ENCODE measurements at regions of chr9 and their contacts with region 1.

Region 1: GRCh38 chr9:84139296-84140070 is 158.9 kb downstream of the RMI1 start:
- DNase-seq: peak in 2 of 5 donors; percentile 32 to 39
- ATAC-seq: peak in 3 of 4 donors; percentile 47 to 63 (median 63)
- H3K4me3 ChIP-seq: no peak overlapping the region
- H3K27ac ChIP-seq: no peak overlapping the region
- H3K4me1 ChIP-seq: peaks cover 0 to 28% (median 16%) of the 10 kb centered on the region in 12 donors
- H3K27me3 ChIP-seq: peaks cover 0 to 36% (median 12%) of the 10 kb centered on the region in 9 donors
- CTCF ChIP-seq: no peak
- POLR2A ChIP-seq: no peak

Region 2: DNA sequence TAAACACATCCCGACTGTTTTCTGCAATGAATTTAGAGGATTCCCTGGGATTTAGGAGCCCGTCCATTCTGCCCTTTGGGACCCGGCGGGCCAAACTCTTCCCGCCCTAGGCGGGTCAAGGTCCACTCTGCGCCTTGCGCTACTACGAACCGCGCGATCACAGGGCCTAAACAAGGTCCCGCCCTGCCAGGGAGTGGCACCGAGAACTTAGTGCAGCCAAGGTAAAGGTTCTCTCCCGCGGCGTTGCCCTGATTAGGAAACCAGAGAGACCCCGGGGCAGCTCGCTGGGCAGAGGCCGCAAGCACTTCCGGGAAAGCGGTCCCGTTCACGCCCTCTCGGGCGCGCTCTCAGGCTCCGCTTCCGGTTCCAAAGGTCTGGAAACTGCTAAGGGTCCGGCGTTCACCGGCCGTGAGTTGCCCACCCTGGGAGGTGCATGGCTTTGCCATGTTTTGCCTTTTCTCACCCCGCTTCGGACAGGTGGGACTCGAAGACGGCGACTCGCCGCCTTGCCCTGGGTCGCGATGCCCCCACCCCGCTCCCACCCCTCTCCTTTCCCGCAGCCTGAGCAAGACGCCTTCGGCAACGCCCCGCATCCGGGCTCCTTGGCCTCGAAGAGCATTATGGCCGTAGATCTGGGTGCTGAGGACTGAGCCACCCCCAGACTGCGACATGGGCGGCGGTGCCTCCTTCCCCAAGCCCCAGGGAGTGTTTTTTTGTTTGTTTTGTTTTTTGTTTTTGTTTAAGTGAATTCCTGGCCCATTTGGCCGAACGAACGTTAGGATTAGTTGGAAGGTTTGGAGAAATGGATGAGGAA is 182.8 kb before region 1 on chr9:
- intact Hi-C with region 1: loop called in 1 of 10 experiments (anchors 10 kb)
- DNase-seq: peak; percentile 78 to 88 (median 84)
- ATAC-seq: peak; percentile 86 to 96 (median 94)
- H3K4me3 ChIP-seq: peak overlapping the region; percentile 35 to 95 (median 72)
- H3K27ac ChIP-seq: peak overlapping the region; percentile 19 to 93 (median 82)
- H3K4me1 ChIP-seq: peaks cover 0 to 21% (median 11%) of the 10 kb centered on the region in 12 donors
- H3K27me3 ChIP-seq: no peaks in the 10 kb centered on the region
- CTCF ChIP-seq: no peak
- POLR2A ChIP-seq: peak in 1 of 2 donors; percentile 14

Region 3: GRCh38 chr9:84207491-84207951 is 68.0 kb after region 1 on chr9:
- intact Hi-C with region 1: loop called in 1 of 10 experiments (anchors 10 kb)
- DNase-seq: no peak
- ATAC-seq: peak in 1 of 4 donors; percentile 60
- H3K4me3 ChIP-seq: peak overlapping the region in 1 of 12 donors; percentile 23
- H3K27ac ChIP-seq: peak overlapping the region in 1 of 12 donors; percentile 58
- H3K4me1 ChIP-seq: peaks cover 0 to 13% (median 0%) of the 10 kb centered on the region in 12 donors
- H3K27me3 ChIP-seq: no peaks in the 10 kb centered on the region
- CTCF ChIP-seq: no peak
- POLR2A ChIP-seq: no peak

Region 4: GRCh38 chr9:84230355-84231145 is 91.1 kb after region 1 on chr9:
- intact Hi-C with region 1: no loop called
- DNase-seq: no peak
- ATAC-seq: peak in 3 of 4 donors; percentile 11 to 42 (median 33)
- H3K4me3 ChIP-seq: no peak overlapping the region
- H3K27ac ChIP-seq: no peak overlapping the region
- H3K4me1 ChIP-seq: peaks cover 0 to 23% (median 4%) of the 10 kb centered on the region in 12 donors
- H3K27me3 ChIP-seq: no peaks in the 10 kb centered on the region
- CTCF ChIP-seq: no peak
- POLR2A ChIP-seq: no peak